PC-9 (cell line): ENCODE measurements at regions of chr20 and their contacts with region 1.

Region 1: GRCh38 chr20:1189827-1190226 is 5.0 kb upstream of the TMEM74B start:
- DNase-seq: no peak
- H3K4me3 ChIP-seq: no peak overlapping the region
- H3K27ac ChIP-seq: no peak overlapping the region
- H3K4me1 ChIP-seq: no peaks in the 10 kb centered on the region
- H3K27me3 ChIP-seq: peaks cover 33% of the 10 kb centered on the region
- CTCF ChIP-seq: no peak

Region 2: DNA sequence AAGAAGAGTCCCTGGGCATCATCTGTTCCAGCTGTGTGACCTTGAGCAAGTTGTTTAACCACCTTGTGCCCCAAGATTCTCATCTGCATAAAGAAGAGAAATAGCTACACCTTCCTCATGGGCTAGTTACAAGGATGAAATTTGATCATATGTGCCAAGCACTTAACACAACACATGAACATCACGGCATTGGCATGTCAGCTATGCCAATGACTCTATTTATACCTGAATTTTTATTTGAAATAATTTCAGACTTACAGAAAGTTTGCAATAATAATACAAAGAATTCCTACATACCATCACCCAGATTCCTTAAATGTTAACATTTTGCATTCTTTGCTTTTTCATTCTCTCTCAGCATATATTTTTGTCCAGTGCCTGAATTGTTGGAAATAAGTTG is 558.7 kb before region 1 on chr20:
- CTCF ChIA-PET with region 1: no interaction called
- POLR2A ChIA-PET with region 1: interaction called, 22 read pairs
- intact Hi-C with region 1: no loop called
- DNase-seq: no peak
- H3K4me3 ChIP-seq: no peak overlapping the region
- H3K27ac ChIP-seq: no peak overlapping the region
- H3K4me1 ChIP-seq: no peaks in the 10 kb centered on the region
- H3K27me3 ChIP-seq: peaks cover 60% of the 10 kb centered on the region
- CTCF ChIP-seq: no peak